ENCODE measurements at regions of chr6 and their contacts with region 1.

Region 1: GRCh38 chr6:112087136-112087911 is at the starts of genes FAM229B and TUBE1:
- DNase-seq: peak; percentile 93
- H3K4me3 Mint-ChIP-seq: no peak within 1 kb of the TSS
- H3K27ac Mint-ChIP-seq: no peak within 1 kb of the TSS
- H3K4me1 Mint-ChIP-seq: no peaks in the 10 kb centered on the region
- H3K27me3 Mint-ChIP-seq: no peaks in the 10 kb centered on the region
- CTCF ChIP-seq: no peak
- total RNA-seq, gene FAM229B: 10.8 and 11.3 TPM in 2 replicates
- total RNA-seq, gene TUBE1: 42.9 and 47.7 TPM in 2 replicates

Region 2: GRCh38 chr6:111709615-111710398 is 377.5 kb before region 1 on chr6:
- CTCF ChIA-PET with region 1: no interaction called
- POLR2A ChIA-PET with region 1: no interaction called
- intact Hi-C with region 1: no loop called
- DNase-seq: peak; percentile 69
- H3K4me3 Mint-ChIP-seq: peak overlapping the region; percentile 28
- H3K27ac Mint-ChIP-seq: no peak overlapping the region
- H3K4me1 Mint-ChIP-seq: peaks cover 7% of the 10 kb centered on the region
- H3K27me3 Mint-ChIP-seq: no peaks in the 10 kb centered on the region
- CTCF ChIP-seq: peak; percentile 56

Region 3: GRCh38 chr6:112029045-112029822 is 58.1 kb before region 1 on chr6:
- CTCF ChIA-PET with region 1: no interaction called
- POLR2A ChIA-PET with region 1: no interaction called
- intact Hi-C with region 1: no loop called
- DNase-seq: peak; percentile 69
- H3K4me3 Mint-ChIP-seq: no peak overlapping the region
- H3K27ac Mint-ChIP-seq: no peak overlapping the region
- H3K4me1 Mint-ChIP-seq: peaks cover 10% of the 10 kb centered on the region
- H3K27me3 Mint-ChIP-seq: peaks cover 11% of the 10 kb centered on the region
- CTCF ChIP-seq: peak; percentile 71

Region 4: GRCh38 chr6:112065426-112065986 is 21.8 kb before region 1 on chr6:
- CTCF ChIA-PET with region 1: interaction called, 13 read pairs
- POLR2A ChIA-PET with region 1: interaction called, 3 read pairs
- intact Hi-C with region 1: no loop called
- DNase-seq: no peak
- H3K4me3 Mint-ChIP-seq: no peak overlapping the region
- H3K27ac Mint-ChIP-seq: no peak overlapping the region
- H3K4me1 Mint-ChIP-seq: no peaks in the 10 kb centered on the region
- H3K27me3 Mint-ChIP-seq: no peaks in the 10 kb centered on the region
- CTCF ChIP-seq: no peak

Region 5: GRCh38 chr6:112076200-112076599 is 11.1 kb before region 1 on chr6:
- CTCF ChIA-PET with region 1: interaction called, 13 read pairs
- POLR2A ChIA-PET with region 1: interaction called, 24 read pairs
- intact Hi-C with region 1: no loop called
- DNase-seq: no peak
- H3K4me3 Mint-ChIP-seq: no peak overlapping the region
- H3K27ac Mint-ChIP-seq: no peak overlapping the region
- H3K4me1 Mint-ChIP-seq: no peaks in the 10 kb centered on the region
- H3K27me3 Mint-ChIP-seq: no peaks in the 10 kb centered on the region
- CTCF ChIP-seq: no peak

Measured in MCF 10A (cell line).